Breast epithelium (tissue), 4 donors: ENCODE measurements at regions of chr5 and their contacts with region 1.

Region 1: GRCh38 chr5:68593191-68593675 is 377.7 kb downstream of the PIK3R1 start:
- DNase-seq: no peak
- H3K4me3 ChIP-seq: no peak overlapping the region
- H3K27ac ChIP-seq: peak overlapping the region; percentile 46 to 71
- H3K4me1 ChIP-seq: no peaks in the 10 kb centered on the region
- H3K27me3 ChIP-seq: no peaks in the 10 kb centered on the region
- CTCF ChIP-seq: no peak
- POLR2A ChIP-seq: no peak

Region 2: DNA sequence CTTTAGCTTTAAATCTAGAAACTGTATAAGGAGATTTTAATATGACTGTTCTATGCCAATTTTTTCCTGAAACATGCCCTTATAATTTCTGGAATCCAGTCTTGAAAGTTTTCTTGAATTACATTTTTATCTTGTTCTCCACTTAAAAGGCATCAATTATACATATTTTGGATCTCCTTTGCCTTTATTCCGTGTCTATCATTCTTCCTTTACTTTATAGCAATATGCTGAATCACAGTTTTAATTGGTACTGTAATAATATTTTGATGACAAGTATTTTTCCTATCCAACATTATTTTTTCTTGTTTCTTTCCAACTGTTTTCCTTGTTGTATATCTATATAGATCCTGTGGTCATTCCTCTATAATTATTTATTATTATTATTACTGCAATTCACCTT is 16.4 kb before region 1 on chr5:
- intact Hi-C with region 1: loop called (anchors 2 kb)
- DNase-seq: no peak
- H3K4me3 ChIP-seq: no peak overlapping the region
- H3K27ac ChIP-seq: no peak overlapping the region
- H3K4me1 ChIP-seq: no peaks in the 10 kb centered on the region
- H3K27me3 ChIP-seq: no peaks in the 10 kb centered on the region
- CTCF ChIP-seq: no peak
- POLR2A ChIP-seq: no peak